CD8-positive, alpha-beta T cell (primary cell): ENCODE measurements at regions of chr1 and their contacts with region 1.

Region 1: GRCh38 chr1:205485338-205486228 is 18.9 kb upstream of the CDK18 start:
- DNase-seq: peak; percentile 39 to 88 (median 68)
- ATAC-seq: peak; percentile 65
- H3K4me3 ChIP-seq: no peak overlapping the region
- H3K4me3 Mint-ChIP-seq: no peak overlapping the region
- H3K27ac ChIP-seq: no peak overlapping the region
- H3K27ac Mint-ChIP-seq: no peak overlapping the region
- H3K4me1 ChIP-seq: peaks cover 19% of the 10 kb centered on the region
- H3K4me1 Mint-ChIP-seq: peaks cover 39% of the 10 kb centered on the region
- H3K27me3 ChIP-seq: no peaks in the 10 kb centered on the region
- H3K27me3 Mint-ChIP-seq: peaks cover 32% of the 10 kb centered on the region
- CTCF ChIP-seq: peak; percentile 81

Region 2: DNA sequence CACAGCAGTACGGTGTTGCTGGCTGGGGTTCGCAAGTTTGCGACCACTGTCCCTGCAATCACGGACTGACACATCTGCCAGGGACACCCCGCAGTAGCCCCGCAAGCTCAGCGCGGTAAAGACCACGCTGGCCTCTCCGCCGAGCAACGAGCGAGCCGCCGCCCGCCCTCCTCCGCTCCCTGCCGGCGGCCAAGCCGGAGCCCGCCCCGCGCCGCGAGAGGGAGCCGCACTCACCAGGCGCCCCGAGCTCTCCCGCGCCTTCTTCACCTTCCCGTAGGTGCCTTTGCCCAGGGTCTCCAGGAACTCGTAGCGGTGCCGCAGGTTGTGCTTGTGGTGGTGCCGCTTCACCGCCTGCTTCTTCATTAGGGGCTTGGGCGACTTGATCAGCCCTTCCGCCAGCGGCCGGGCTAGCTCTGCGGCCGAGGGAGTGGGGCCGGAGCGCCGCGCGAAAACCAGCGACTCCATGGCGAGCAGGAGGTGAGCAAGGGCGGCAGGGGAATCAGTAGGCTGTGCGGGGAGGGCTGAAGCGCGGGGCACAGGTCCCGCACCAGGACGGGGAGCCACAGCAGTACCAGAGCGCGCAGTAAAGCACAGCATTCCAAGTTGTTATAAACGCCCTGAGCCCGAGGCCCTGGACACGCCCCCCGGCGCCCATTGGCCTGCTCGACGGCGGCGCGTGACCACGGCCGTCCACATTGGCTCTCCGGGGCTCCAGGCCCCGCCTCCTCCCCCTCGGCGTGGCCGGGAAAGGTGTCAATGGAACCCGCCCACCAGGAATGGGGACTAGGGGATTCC is 164.2 kb before region 1 on chr1 and contains the start of gene NUAK2:
- CTCF ChIA-PET with region 1: interaction called, 18 read pairs
- POLR2A ChIA-PET with region 1: no interaction called
- intact Hi-C with region 1: loop called in 1 of 2 experiments (anchors 1 kb)
- DNase-seq: peak; percentile 56 to 92 (median 86)
- ATAC-seq: peak; percentile 88
- H3K4me3 ChIP-seq: peak within 1 kb of the TSS; percentile 73 to 99
- H3K4me3 Mint-ChIP-seq: peak within 1 kb of the TSS; percentile 98
- H3K27ac ChIP-seq: peak within 1 kb of the TSS; percentile 68 to 72
- H3K27ac Mint-ChIP-seq: peak within 1 kb of the TSS; percentile 96
- H3K4me1 ChIP-seq: peaks cover 50% of the 10 kb centered on the region
- H3K4me1 Mint-ChIP-seq: peaks cover 71% of the 10 kb centered on the region
- H3K27me3 ChIP-seq: no peaks in the 10 kb centered on the region
- H3K27me3 Mint-ChIP-seq: no peaks in the 10 kb centered on the region
- CTCF ChIP-seq: peak; percentile 32
- total RNA-seq, gene NUAK2: 17.1 to 18.3 TPM

Region 3: GRCh38 chr1:205354259-205354904 is 131.2 kb before region 1 on chr1:
- CTCF ChIA-PET with region 1: interaction called, 123 read pairs
- POLR2A ChIA-PET with region 1: interaction called, 10 read pairs
- intact Hi-C with region 1: loop called in 1 of 2 experiments (anchors 1 kb)
- DNase-seq: peak; percentile 30 to 81 (median 67)
- ATAC-seq: peak; percentile 87
- H3K4me3 ChIP-seq: no peak overlapping the region
- H3K4me3 Mint-ChIP-seq: no peak overlapping the region
- H3K27ac ChIP-seq: no peak overlapping the region
- H3K27ac Mint-ChIP-seq: no peak overlapping the region
- H3K4me1 ChIP-seq: no peaks in the 10 kb centered on the region
- H3K4me1 Mint-ChIP-seq: no peaks in the 10 kb centered on the region
- H3K27me3 ChIP-seq: no peaks in the 10 kb centered on the region
- H3K27me3 Mint-ChIP-seq: peaks cover 16% of the 10 kb centered on the region
- CTCF ChIP-seq: peak; percentile 97

Region 4: GRCh38 chr1:205410581-205411298 is 74.8 kb before region 1 on chr1:
- CTCF ChIA-PET with region 1: interaction called, 29 read pairs
- POLR2A ChIA-PET with region 1: interaction called, 4 read pairs
- intact Hi-C with region 1: no loop called
- DNase-seq: no peak
- ATAC-seq: no peak
- H3K4me3 ChIP-seq: no peak overlapping the region
- H3K4me3 Mint-ChIP-seq: no peak overlapping the region
- H3K27ac ChIP-seq: no peak overlapping the region
- H3K27ac Mint-ChIP-seq: no peak overlapping the region
- H3K4me1 ChIP-seq: no peaks in the 10 kb centered on the region
- H3K4me1 Mint-ChIP-seq: peaks cover 14% of the 10 kb centered on the region
- H3K27me3 ChIP-seq: peaks cover 0 to 3% of the 10 kb centered on the region in 2 experiments
- H3K27me3 Mint-ChIP-seq: peaks cover 5% of the 10 kb centered on the region
- CTCF ChIP-seq: no peak

Region 5: GRCh38 chr1:205430696-205431305 is 54.8 kb before region 1 on chr1:
- CTCF ChIA-PET with region 1: interaction called, 43 read pairs
- POLR2A ChIA-PET with region 1: no interaction called
- intact Hi-C with region 1: loop called in 1 of 2 experiments (anchors 2 kb)
- DNase-seq: peak; percentile 27 to 79 (median 64)
- ATAC-seq: peak; percentile 90
- H3K4me3 ChIP-seq: peak overlapping the region; percentile 26 to 37
- H3K4me3 Mint-ChIP-seq: peak overlapping the region; percentile 86
- H3K27ac ChIP-seq: no peak overlapping the region
- H3K27ac Mint-ChIP-seq: no peak overlapping the region
- H3K4me1 ChIP-seq: peaks cover 6% of the 10 kb centered on the region
- H3K4me1 Mint-ChIP-seq: peaks cover 10% of the 10 kb centered on the region
- H3K27me3 ChIP-seq: no peaks in the 10 kb centered on the region
- H3K27me3 Mint-ChIP-seq: no peaks in the 10 kb centered on the region
- CTCF ChIP-seq: peak; percentile 58

Region 6: GRCh38 chr1:205512059-205513045 is 26.8 kb after region 1 on chr1:
- CTCF ChIA-PET with region 1: interaction called, 10 read pairs
- POLR2A ChIA-PET with region 1: no interaction called
- intact Hi-C with region 1: no loop called
- DNase-seq: no peak
- ATAC-seq: no peak
- H3K4me3 ChIP-seq: no peak overlapping the region
- H3K4me3 Mint-ChIP-seq: no peak overlapping the region
- H3K27ac ChIP-seq: no peak overlapping the region
- H3K27ac Mint-ChIP-seq: peak overlapping the region; percentile 4
- H3K4me1 ChIP-seq: no peaks in the 10 kb centered on the region
- H3K4me1 Mint-ChIP-seq: no peaks in the 10 kb centered on the region
- H3K27me3 ChIP-seq: no peaks in the 10 kb centered on the region
- H3K27me3 Mint-ChIP-seq: no peaks in the 10 kb centered on the region
- CTCF ChIP-seq: no peak

Region 7: GRCh38 chr1:205568469-205569361 is 83.1 kb after region 1 on chr1:
- CTCF ChIA-PET with region 1: no interaction called
- POLR2A ChIA-PET with region 1: no interaction called
- intact Hi-C with region 1: no loop called
- DNase-seq: peak in 2 of 9 experiments; percentile 23 to 36
- ATAC-seq: peak; percentile 31
- H3K4me3 ChIP-seq: no peak overlapping the region
- H3K4me3 Mint-ChIP-seq: peak overlapping the region; percentile 76
- H3K27ac ChIP-seq: no peak overlapping the region
- H3K27ac Mint-ChIP-seq: no peak overlapping the region
- H3K4me1 ChIP-seq: peaks cover 4% of the 10 kb centered on the region
- H3K4me1 Mint-ChIP-seq: peaks cover 5% of the 10 kb centered on the region
- H3K27me3 ChIP-seq: peaks cover 13 to 14% of the 10 kb centered on the region in 2 experiments
- H3K27me3 Mint-ChIP-seq: peaks cover 47% of the 10 kb centered on the region
- CTCF ChIP-seq: no peak

Region 8: GRCh38 chr1:205658943-205659581 is 173.5 kb after region 1 on chr1:
- CTCF ChIA-PET with region 1: interaction called, 10 read pairs
- POLR2A ChIA-PET with region 1: no interaction called
- intact Hi-C with region 1: loop called (anchors 5 kb)
- DNase-seq: peak; percentile 57 to 82 (median 75)
- ATAC-seq: peak; percentile 88
- H3K4me3 ChIP-seq: no peak overlapping the region
- H3K4me3 Mint-ChIP-seq: no peak overlapping the region
- H3K27ac ChIP-seq: no peak overlapping the region
- H3K27ac Mint-ChIP-seq: no peak overlapping the region
- H3K4me1 ChIP-seq: no peaks in the 10 kb centered on the region
- H3K4me1 Mint-ChIP-seq: no peaks in the 10 kb centered on the region
- H3K27me3 ChIP-seq: no peaks in the 10 kb centered on the region
- H3K27me3 Mint-ChIP-seq: no peaks in the 10 kb centered on the region
- CTCF ChIP-seq: peak; percentile 82